Pancreas (tissue), 10 donors: ENCODE measurements at regions of chr1 and their contacts with region 1.

Region 1: GRCh38 chr1:225318706-225319575 is 108.9 kb downstream of the LBR start:
- DNase-seq: peak in 4 of 6 donors; percentile 21 to 58 (median 40)
- ATAC-seq: peak; percentile 95 to 99 (median 98)
- H3K4me3 ChIP-seq: no peak overlapping the region
- H3K27ac ChIP-seq: no peak overlapping the region
- H3K4me1 ChIP-seq: peaks cover 0 to 10% (median 6%) of the 10 kb centered on the region in 3 donors
- H3K27me3 ChIP-seq: no peaks in the 10 kb centered on the region
- CTCF ChIP-seq: peak; percentile 31 to 61 (median 48)

Region 2: DNA sequence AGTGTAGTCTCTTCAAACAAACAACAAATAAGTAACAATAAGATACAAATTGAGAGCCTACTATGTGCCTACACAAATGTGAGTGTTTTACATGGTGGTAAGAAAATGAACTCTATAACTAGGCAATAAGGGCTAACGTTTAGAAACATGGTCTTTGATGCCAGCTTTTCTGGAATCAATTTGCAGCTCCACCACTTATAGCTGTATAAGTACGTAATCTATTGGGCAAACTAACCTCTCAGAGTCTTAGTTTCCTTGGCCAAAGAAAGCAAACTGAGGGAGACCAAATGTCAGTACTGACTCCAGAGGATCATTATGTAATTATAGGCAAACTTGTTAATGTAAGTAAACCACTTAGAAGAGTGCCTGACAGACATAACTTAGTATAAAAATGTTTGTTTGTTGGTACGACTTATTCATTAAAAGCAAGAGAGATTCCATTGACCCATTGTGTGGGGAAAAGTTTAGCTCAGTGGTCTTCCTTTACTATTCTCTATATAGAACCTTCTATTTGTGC is 49.2 kb after region 1 on chr1:
- intact Hi-C with region 1: no loop called
- DNase-seq: no peak
- ATAC-seq: no peak
- H3K4me3 ChIP-seq: no peak overlapping the region
- H3K27ac ChIP-seq: no peak overlapping the region
- H3K4me1 ChIP-seq: no peaks in the 10 kb centered on the region
- H3K27me3 ChIP-seq: no peaks in the 10 kb centered on the region
- CTCF ChIP-seq: no peak

Region 3: GRCh38 chr1:225441314-225442122 is 122.6 kb after region 1 on chr1:
- intact Hi-C with region 1: loop called in 1 of 3 experiments (anchors 10 kb)
- DNase-seq: peak in 2 of 6 donors; percentile 59 to 66
- ATAC-seq: peak; percentile 77 to 86 (median 80)
- H3K4me3 ChIP-seq: no peak overlapping the region
- H3K27ac ChIP-seq: peak overlapping the region; percentile 40 to 80 (median 68)
- H3K4me1 ChIP-seq: peaks cover 18 to 43% (median 28%) of the 10 kb centered on the region in 3 donors
- H3K27me3 ChIP-seq: no peaks in the 10 kb centered on the region
- CTCF ChIP-seq: peak in 2 of 4 donors; percentile 11 to 30

Region 4: GRCh38 chr1:225595974-225596551 is 277.1 kb after region 1 on chr1:
- intact Hi-C with region 1: no loop called
- DNase-seq: no peak
- ATAC-seq: no peak
- H3K4me3 ChIP-seq: no peak overlapping the region
- H3K27ac ChIP-seq: no peak overlapping the region
- H3K4me1 ChIP-seq: peaks cover 0 to 4% (median 0%) of the 10 kb centered on the region in 3 donors
- H3K27me3 ChIP-seq: no peaks in the 10 kb centered on the region
- CTCF ChIP-seq: no peak